SK-N-SH (cell line): ENCODE measurements at regions of chr5 and their contacts with region 1.

Region 1: DNA sequence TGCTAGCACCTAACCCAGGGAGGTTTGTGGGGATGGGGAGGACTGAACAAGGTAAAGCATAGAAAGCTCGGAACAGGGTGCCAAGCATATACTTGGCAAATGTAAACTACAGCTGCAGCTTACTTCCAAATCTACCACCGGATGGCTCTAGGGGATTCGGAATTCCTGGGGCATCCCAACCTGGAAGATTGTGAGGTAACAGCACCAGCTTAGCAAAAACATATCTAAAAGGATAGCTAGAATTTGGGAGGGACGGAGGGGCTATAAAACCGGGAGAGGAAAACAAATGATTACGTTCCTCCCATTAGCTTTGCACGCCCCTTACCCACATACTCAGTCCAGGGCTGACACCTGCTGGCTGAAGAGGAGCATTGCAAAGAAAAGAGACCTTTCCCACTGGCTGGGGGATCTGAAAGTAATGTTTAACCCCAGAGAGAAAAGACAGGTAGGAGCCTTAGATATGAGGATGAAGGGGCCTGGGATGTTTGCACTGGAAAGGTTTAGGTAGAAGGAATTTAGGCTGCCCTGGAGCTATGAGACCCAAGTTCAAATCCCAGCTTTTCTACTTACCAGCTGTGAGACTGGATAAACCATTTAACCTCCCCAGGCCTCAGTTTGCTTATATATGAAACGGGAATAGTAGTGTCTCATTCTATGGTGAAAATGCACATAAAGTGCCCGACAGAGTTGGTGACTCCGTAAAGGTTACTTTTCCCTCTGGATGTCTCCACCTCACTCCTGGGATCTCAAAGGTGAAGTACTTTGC is 73.6 kb downstream of the FAM114A2 start:
- DNase-seq: peak; percentile 77
- H3K4me3 ChIP-seq: peak overlapping the region in 1 of 2 experiments; percentile 41; a peak in 2 of 4 replicates
- H3K27ac ChIP-seq: no peak overlapping the region
- H3K4me1 ChIP-seq: peaks cover 0 to 7% of the 10 kb centered on the region in 2 experiments; a peak in 1 of 4 replicates
- H3K27me3 ChIP-seq: no peaks in the 10 kb centered on the region
- CTCF ChIP-seq: peak; percentile 96
- EP300 ChIP-seq: no peak
- RAD21 ChIP-seq: peak; percentile 99

Region 2: DNA sequence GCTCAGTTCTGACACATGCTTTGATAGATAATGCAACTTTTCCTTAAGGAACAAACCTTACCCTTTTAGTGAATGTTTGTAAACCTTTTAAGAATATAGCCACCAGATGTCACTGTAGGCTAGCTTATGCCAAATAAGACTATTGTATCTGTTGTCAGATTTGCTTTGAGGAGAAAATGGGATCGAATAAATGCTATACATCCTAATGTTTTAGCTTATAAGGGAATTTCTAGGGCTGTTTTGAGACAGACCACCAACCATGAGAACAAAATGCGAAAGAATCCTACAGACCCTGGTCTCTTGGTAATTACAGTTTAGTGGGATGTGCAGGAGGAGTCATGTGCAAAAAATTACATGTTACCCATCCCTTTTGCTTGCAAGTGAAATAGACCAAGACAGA is 1432.3 kb before region 1 on chr5:
- CTCF ChIA-PET with region 1: interaction called, 25 read pairs
- POLR2A ChIA-PET with region 1: no interaction called
- DNase-seq: peak; percentile 16
- H3K4me3 ChIP-seq: no peak overlapping the region; a peak in 1 of 4 replicates
- H3K27ac ChIP-seq: no peak overlapping the region
- H3K4me1 ChIP-seq: no peaks in the 10 kb centered on the region
- H3K27me3 ChIP-seq: no peaks in the 10 kb centered on the region
- CTCF ChIP-seq: peak; percentile 73
- EP300 ChIP-seq: no peak
- RAD21 ChIP-seq: peak; percentile 83

Region 3: DNA sequence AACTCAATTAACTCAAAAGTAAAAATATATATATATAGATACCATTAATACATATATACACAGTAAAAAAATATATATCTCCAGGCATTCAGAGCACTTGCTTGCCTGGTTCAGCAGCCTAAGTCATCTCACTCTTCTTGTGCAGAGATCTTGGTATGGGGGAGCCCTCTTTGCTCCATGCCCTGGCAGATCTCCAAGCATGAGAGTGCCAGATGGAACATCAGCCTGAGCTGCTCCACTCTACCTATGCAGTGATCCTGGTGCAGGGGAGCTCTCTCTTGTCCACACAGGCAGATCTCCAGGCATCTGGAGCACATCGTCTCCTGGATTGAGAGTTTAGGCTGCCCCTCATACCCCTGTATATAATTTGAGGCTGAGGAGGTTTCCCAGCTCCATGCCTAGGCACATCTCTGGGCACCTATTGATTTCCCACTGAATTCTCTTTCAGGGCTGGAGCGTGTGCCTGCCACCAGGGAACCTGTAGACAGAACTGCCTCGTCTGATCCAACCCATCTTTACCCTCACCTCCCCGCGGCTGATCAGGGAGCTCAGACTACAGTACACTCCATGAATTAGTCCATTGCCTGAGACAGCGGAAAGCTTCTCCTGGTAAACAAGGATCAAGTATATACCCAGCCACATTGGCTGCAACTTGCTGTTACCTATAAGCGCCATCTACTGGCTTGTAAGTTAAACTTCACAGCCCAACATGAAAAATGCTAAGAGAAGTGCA is 817.0 kb before region 1 on chr5:
- CTCF ChIA-PET with region 1: interaction called, 13 read pairs
- POLR2A ChIA-PET with region 1: no interaction called
- DNase-seq: peak; percentile 9
- H3K4me3 ChIP-seq: no peak overlapping the region
- H3K27ac ChIP-seq: no peak overlapping the region
- H3K4me1 ChIP-seq: no peaks in the 10 kb centered on the region
- H3K27me3 ChIP-seq: no peaks in the 10 kb centered on the region
- CTCF ChIP-seq: peak; percentile 74
- EP300 ChIP-seq: no peak
- RAD21 ChIP-seq: peak; percentile 73

Region 4: GRCh38 chr5:153496835-153497234 is 468.2 kb before region 1 on chr5:
- CTCF ChIA-PET with region 1: interaction called, 90 read pairs
- POLR2A ChIA-PET with region 1: no interaction called
- DNase-seq: peak; percentile 35
- H3K4me3 ChIP-seq: no peak overlapping the region
- H3K27ac ChIP-seq: no peak overlapping the region
- H3K4me1 ChIP-seq: no peaks in the 10 kb centered on the region
- H3K27me3 ChIP-seq: no peaks in the 10 kb centered on the region
- CTCF ChIP-seq: peak; percentile 88
- EP300 ChIP-seq: no peak
- RAD21 ChIP-seq: peak; percentile 92

Region 5: GRCh38 chr5:153672347-153673090 is 292.5 kb before region 1 on chr5:
- CTCF ChIA-PET with region 1: no interaction called
- POLR2A ChIA-PET with region 1: no interaction called
- DNase-seq: no peak
- H3K4me3 ChIP-seq: no peak overlapping the region
- H3K27ac ChIP-seq: no peak overlapping the region
- H3K4me1 ChIP-seq: no peaks in the 10 kb centered on the region
- H3K27me3 ChIP-seq: no peaks in the 10 kb centered on the region
- CTCF ChIP-seq: no peak
- EP300 ChIP-seq: no peak
- RAD21 ChIP-seq: no peak

Region 6: DNA sequence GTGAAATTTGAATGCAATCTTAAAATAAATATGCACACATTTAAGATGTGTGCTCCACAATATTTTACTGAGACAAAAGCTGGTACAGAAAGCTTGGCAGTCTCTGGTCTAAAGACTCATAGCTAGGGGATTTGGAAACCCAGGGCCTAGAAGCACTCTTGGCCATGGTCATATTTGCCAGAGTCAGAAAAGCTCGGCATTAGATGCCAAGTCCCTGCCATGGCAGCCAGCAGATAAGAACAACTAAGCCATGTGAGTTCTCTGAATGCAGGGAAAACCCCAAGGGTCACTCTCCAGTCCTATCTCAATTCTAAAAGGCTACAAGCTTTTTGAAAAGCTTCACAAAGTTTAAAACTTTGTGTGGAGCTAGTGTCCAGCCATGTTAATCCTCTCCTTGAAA is 45.9 kb before region 1 on chr5:
- CTCF ChIA-PET with region 1: no interaction called
- POLR2A ChIA-PET with region 1: no interaction called
- DNase-seq: no peak
- H3K4me3 ChIP-seq: no peak overlapping the region
- H3K27ac ChIP-seq: no peak overlapping the region
- H3K4me1 ChIP-seq: no peaks in the 10 kb centered on the region
- H3K27me3 ChIP-seq: no peaks in the 10 kb centered on the region
- CTCF ChIP-seq: no peak
- EP300 ChIP-seq: no peak
- RAD21 ChIP-seq: no peak

Region 7: GRCh38 chr5:153952893-153953292 is 12.2 kb before region 1 on chr5:
- CTCF ChIA-PET with region 1: interaction called, 56 read pairs
- POLR2A ChIA-PET with region 1: no interaction called
- DNase-seq: no peak
- H3K4me3 ChIP-seq: no peak overlapping the region
- H3K27ac ChIP-seq: peak overlapping the region in 1 of 2 experiments; percentile 46; a peak in 2 of 4 replicates
- H3K4me1 ChIP-seq: no peaks in the 10 kb centered on the region
- H3K27me3 ChIP-seq: no peaks in the 10 kb centered on the region
- CTCF ChIP-seq: no peak
- EP300 ChIP-seq: 0 out of 4 replicates have a peak, but pooled peaks of 1 of the 2 experiments have one; percentile 32
- RAD21 ChIP-seq: no peak

Region 8: GRCh38 chr5:154038707-154039457 is 73.8 kb after region 1 on chr5 and contains the starts of genes FAM114A2 and MFAP3:
- CTCF ChIA-PET with region 1: no interaction called
- POLR2A ChIA-PET with region 1: no interaction called
- DNase-seq: peak; percentile 89
- H3K4me3 ChIP-seq: peak within 1 kb of the TSS; percentile 97 to 99
- H3K27ac ChIP-seq: peak within 1 kb of the TSS; percentile 73 to 91; a peak in 3 of 4 replicates
- H3K4me1 ChIP-seq: peaks cover 0 to 8% of the 10 kb centered on the region in 2 experiments; a peak in 2 of 4 replicates
- H3K27me3 ChIP-seq: no peaks in the 10 kb centered on the region
- CTCF ChIP-seq: no peak
- EP300 ChIP-seq: no peak; a peak in 1 of 4 replicates
- RAD21 ChIP-seq: no peak
- polyA plus RNA-seq, gene FAM114A2: 9.0 and 11.9 TPM in 2 replicates
- polyA plus RNA-seq, gene MFAP3: 16.0 and 23.3 TPM in 2 replicates

Region 9: DNA sequence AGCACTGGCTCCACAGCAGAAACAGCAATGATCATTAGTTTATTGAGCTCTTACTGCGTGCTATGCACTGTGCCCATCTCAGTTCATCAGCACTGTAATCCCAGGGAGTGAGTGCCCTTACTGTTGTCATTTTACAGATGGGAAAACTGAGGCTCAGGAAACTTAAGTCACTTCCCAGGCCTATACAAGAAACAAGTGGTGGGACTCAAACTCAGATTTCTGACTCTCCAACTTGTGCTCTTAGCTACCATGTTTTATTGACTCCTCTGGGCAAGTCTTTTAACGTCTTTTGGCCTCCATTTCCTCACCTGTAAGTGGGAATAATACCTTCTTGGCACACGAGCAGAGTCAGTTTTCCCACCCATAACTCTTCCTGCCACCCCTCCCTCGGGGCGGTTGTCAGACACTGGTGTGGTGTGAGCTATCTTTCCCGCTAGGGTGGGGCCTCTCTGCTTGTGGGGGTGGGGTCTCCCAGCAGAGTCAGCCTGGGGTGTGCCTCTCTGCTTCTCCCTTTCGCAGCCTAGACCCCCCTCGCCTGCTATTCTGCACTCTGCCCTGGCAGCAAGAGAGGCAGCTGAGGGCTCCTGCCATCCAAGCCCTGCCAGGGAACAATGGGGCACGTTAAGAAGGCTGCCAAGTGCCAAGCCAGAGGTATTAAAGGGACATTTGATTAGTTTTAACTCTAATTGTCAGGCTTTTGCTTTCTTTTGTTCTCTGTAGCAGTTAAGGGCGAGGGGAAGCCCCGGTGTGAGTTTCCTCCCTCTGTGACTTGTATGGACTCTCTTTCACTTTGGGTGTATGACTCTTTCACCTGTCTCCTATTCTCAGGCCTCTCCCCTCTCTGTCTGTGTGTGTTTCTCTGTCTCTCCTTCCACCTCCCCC is 237.6 kb after region 1 on chr5:
- CTCF ChIA-PET with region 1: no interaction called
- POLR2A ChIA-PET with region 1: no interaction called
- DNase-seq: no peak
- H3K4me3 ChIP-seq: no peak overlapping the region
- H3K27ac ChIP-seq: no peak overlapping the region
- H3K4me1 ChIP-seq: peaks cover 3 to 19% of the 10 kb centered on the region in 2 experiments; a peak in 3 of 4 replicates
- H3K27me3 ChIP-seq: no peaks in the 10 kb centered on the region
- CTCF ChIP-seq: no peak
- EP300 ChIP-seq: no peak
- RAD21 ChIP-seq: no peak